Panc1 (cell line): ENCODE measurements at regions of chr6 and their contacts with region 1.

Region 1: DNA sequence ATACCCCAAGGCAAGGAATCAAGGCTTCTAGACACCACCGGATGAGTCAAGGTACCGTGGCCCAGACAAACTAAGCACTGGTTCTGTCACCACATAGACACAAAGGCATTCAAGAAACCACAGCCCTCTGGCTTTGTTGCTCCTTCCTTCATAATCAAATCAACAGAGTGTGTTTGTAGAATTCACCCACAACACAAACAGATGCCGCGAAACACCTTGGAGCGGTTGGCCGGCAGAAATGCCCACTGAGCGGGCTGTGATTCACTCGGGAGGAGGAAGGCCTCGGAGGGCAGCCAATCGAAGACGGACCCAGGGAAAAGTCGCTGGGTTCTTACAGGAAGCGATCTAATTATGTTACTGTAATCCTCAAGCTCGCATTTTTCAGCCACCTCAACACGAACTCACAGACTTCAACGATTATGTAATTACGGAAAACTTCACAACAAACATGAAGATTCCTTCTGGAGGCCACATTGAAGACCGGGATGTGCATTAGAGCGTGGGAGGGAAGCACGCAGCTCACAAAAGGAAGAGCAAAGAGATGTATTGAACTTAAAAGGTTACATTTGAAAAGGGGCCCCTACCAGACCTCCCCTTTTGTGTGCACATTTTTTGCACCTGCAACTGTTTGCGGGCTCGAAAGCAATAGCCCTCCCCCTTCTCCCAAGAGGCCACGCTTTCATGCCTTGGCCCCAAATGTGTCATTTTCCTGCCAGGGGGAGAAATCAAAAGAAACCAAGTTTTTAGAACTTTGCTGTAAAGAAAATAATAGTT is 184.7 kb upstream of the PREP start:
- DNase-seq: no peak
- ATAC-seq: peak; percentile 89
- H3K4me3 ChIP-seq: peak overlapping the region in 1 of 2 experiments; percentile 16; a peak in 2 of 4 replicates
- H3K27ac ChIP-seq: peak overlapping the region; percentile 71
- H3K4me1 ChIP-seq: peaks cover 9% of the 10 kb centered on the region; the same call in 1 of the 2 replicates
- H3K27me3 ChIP-seq: no peaks in the 10 kb centered on the region
- CTCF ChIP-seq: no peak

Region 2: GRCh38 chr6:105492706-105493673 is 94.5 kb before region 1 on chr6:
- CTCF ChIA-PET with region 1: no interaction called
- POLR2A ChIA-PET with region 1: no interaction called
- in situ Hi-C with region 1: no loop called
- intact Hi-C with region 1: loop called (anchors 5 kb)
- DNase-seq: no peak
- ATAC-seq: no peak
- H3K4me3 ChIP-seq: no peak overlapping the region
- H3K27ac ChIP-seq: no peak overlapping the region
- H3K4me1 ChIP-seq: peaks cover 9% of the 10 kb centered on the region
- H3K27me3 ChIP-seq: no peaks in the 10 kb centered on the region
- CTCF ChIP-seq: no peak